Activated naive CD4-positive, alpha-beta T cell treated with anti-CD3 and anti-CD28 coated beads, Interleukin-2, amount 10 ng/mL, durations not matched to agents 7 days and 5 days (primary cell): ENCODE measurements at regions of chr14 and their contacts with region 1.

Region 1: GRCh38 chr14:103104654-103105452 is 10.3 kb downstream of the EXOC3L4 start:
- DNase-seq: peak; percentile 75
- H3K4me3 Mint-ChIP-seq: no peak overlapping the region
- H3K27ac Mint-ChIP-seq: no peak overlapping the region
- H3K4me1 Mint-ChIP-seq: peaks cover 9% of the 10 kb centered on the region
- H3K27me3 Mint-ChIP-seq: peaks cover 73% of the 10 kb centered on the region

Region 2: DNA sequence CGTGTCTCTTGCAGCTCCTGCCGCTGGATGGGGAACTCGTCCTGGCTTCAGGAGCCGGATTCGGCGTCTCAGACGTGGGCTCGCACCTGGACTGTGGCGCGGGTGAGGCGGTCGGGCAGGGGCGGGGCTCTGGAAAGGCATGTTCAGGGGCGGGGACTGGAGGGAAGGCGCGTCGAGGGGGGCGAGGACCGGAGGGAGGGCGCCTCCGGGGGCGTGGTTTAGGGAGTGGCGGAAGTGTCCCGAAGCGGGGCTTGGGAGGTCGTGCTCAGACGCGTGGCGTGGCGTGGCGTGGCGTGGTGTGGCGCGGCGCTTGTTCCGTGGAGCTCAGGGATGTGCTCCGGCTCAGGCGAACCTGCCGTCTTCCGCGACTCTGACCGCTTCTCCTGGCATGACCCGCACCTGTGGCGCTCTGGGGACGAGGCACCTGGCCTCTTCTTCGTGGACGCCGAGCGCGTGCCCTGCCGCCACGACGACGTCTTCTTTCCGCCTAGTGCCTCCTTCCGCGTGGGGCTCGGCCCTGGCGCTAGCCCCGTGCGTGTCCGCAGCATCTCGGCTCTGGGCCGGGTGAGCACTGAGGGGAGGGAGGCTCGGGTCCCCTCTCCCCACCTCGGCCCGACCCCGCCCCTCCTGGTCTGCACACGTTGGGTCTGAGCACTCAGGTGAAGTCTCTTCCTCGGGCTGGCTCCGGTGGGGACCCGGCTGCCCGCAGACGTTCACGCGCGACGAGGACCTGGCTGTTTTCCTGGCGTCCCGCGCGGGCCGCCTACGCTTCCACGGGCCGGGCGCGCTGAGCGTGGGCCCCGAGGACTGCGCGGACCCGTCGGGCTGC is 176.2 kb before region 1 on chr14:
- CTCF ChIA-PET with region 1: no interaction called
- DNase-seq: peak; percentile 82
- H3K4me3 Mint-ChIP-seq: peak overlapping the region; percentile 61
- H3K27ac Mint-ChIP-seq: no peak overlapping the region
- H3K4me1 Mint-ChIP-seq: peaks cover 7% of the 10 kb centered on the region
- H3K27me3 Mint-ChIP-seq: peaks cover 30% of the 10 kb centered on the region

Region 3: DNA sequence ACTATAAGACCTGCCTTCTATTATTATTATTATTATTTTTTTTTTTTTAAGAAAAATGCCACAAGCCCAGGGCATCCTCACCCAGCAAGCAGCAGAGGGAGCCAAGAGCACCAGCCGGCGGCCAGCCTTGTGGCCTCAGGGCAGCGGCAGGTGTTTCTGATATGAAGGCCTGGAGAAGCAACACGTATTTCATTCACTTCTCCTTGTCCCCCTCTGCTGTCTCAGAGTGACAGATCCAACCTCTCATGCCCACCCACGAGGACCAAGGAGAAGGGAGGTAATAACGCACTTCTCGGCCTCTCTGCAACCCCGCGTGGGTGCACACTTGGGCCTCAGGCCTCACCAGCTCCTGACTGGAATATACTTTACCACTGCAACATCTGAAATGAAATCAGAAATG is 72.9 kb before region 1 on chr14:
- CTCF ChIA-PET with region 1: no interaction called
- DNase-seq: no peak
- H3K4me3 Mint-ChIP-seq: no peak overlapping the region
- H3K27ac Mint-ChIP-seq: no peak overlapping the region
- H3K4me1 Mint-ChIP-seq: no peaks in the 10 kb centered on the region
- H3K27me3 Mint-ChIP-seq: no peaks in the 10 kb centered on the region

Region 4: GRCh38 chr14:103094406-103095209 is 10.2 kb before region 1 on chr14 and contains the start of gene EXOC3L4:
- CTCF ChIA-PET with region 1: interaction called, 30 read pairs
- DNase-seq: no peak
- H3K4me3 Mint-ChIP-seq: no peak within 1 kb of the TSS
- H3K27ac Mint-ChIP-seq: no peak within 1 kb of the TSS
- H3K4me1 Mint-ChIP-seq: peaks cover 3% of the 10 kb centered on the region
- H3K27me3 Mint-ChIP-seq: peaks cover 44% of the 10 kb centered on the region

Region 5: GRCh38 chr14:103292426-103293374 is 187.8 kb after region 1 on chr14:
- CTCF ChIA-PET with region 1: interaction called, 48 read pairs
- DNase-seq: peak; percentile 81
- H3K4me3 Mint-ChIP-seq: no peak overlapping the region
- H3K27ac Mint-ChIP-seq: no peak overlapping the region
- H3K4me1 Mint-ChIP-seq: no peaks in the 10 kb centered on the region
- H3K27me3 Mint-ChIP-seq: peaks cover 46% of the 10 kb centered on the region